Vagina (tissue), 2 donors: ENCODE measurements at regions of chr7 and their contacts with region 1.

Region 1: DNA sequence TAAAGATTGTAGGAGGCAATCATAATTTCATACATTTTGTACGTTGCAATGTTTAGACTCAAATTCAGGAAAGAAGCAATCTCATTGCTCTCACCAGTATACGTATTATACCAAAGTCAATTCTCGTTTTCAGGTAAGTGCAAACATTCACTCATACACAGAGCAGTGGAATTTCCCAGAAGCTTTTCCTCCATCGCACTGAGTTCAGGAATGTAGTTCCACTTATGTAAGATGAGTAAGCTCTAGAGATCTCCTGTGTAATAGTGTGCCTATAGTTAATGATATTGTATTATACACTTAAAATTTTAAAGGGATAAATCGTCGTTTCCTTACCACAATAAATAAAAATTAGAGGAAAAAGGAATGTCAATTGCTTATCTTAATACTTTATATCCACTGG is 470.8 kb upstream of the KCND2 start:
- DNase-seq: no peak
- H3K4me3 ChIP-seq: no peak overlapping the region
- H3K27ac ChIP-seq: no peak overlapping the region
- H3K4me1 ChIP-seq: no peaks in the 10 kb centered on the region
- H3K27me3 ChIP-seq: no peaks in the 10 kb centered on the region
- CTCF ChIP-seq: no peak
- POLR2A ChIP-seq: no peak

Region 2: DNA sequence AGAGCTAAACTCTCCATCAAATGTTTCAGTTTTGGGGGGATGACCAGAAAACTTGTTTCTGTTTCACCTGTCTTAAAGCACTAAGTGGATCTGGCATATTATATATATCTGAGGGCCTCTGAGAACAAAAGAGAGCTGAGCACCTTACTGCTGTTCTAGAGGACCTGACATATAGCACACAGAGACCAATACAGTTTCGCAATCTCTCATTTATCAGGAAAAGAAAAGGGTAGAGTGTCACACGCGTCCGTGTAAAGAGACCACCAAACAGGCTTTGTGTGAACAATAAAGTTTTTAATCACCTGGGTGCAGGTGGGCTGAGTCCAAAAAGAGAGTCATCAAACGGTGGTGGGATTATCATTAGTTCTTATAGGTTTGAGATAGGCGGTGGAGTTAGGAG is 36.3 kb after region 1 on chr7:
- intact Hi-C with region 1: loop called (anchors 1 kb)
- DNase-seq: no peak
- H3K4me3 ChIP-seq: no peak overlapping the region
- H3K27ac ChIP-seq: no peak overlapping the region
- H3K4me1 ChIP-seq: no peaks in the 10 kb centered on the region
- H3K27me3 ChIP-seq: no peaks in the 10 kb centered on the region
- CTCF ChIP-seq: no peak
- POLR2A ChIP-seq: no peak

Region 3: DNA sequence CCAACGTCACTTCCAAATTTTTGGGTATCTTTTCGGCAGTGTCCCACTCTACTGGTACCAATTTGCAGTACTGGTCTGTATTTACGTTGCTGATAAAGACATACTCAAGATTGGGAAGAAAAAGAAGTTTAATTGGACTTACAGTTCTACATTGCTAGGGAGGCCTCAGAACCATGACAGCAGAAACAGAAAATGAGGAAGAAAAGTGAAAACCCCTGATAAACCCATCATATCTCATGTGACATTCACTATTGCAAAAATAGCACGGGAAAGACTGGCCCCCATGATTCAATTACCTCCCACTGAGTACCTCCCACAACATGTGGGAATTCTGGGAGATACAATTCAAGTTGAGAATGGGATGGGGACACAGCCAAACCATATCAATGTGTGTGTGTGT is 106.8 kb after region 1 on chr7:
- intact Hi-C with region 1: no loop called
- DNase-seq: no peak
- H3K4me3 ChIP-seq: no peak overlapping the region
- H3K27ac ChIP-seq: no peak overlapping the region
- H3K4me1 ChIP-seq: no peaks in the 10 kb centered on the region
- H3K27me3 ChIP-seq: no peaks in the 10 kb centered on the region
- CTCF ChIP-seq: no peak
- POLR2A ChIP-seq: no peak

Region 4: GRCh38 chr7:120014920-120015465 is 212.8 kb after region 1 on chr7:
- intact Hi-C with region 1: no loop called
- DNase-seq: no peak
- H3K4me3 ChIP-seq: no peak overlapping the region
- H3K27ac ChIP-seq: no peak overlapping the region
- H3K4me1 ChIP-seq: no peaks in the 10 kb centered on the region
- H3K27me3 ChIP-seq: no peaks in the 10 kb centered on the region
- CTCF ChIP-seq: no peak
- POLR2A ChIP-seq: no peak